Aorta (tissue), 5 donors: ENCODE measurements at regions of chr7 and their contacts with region 1.

Region 1: DNA sequence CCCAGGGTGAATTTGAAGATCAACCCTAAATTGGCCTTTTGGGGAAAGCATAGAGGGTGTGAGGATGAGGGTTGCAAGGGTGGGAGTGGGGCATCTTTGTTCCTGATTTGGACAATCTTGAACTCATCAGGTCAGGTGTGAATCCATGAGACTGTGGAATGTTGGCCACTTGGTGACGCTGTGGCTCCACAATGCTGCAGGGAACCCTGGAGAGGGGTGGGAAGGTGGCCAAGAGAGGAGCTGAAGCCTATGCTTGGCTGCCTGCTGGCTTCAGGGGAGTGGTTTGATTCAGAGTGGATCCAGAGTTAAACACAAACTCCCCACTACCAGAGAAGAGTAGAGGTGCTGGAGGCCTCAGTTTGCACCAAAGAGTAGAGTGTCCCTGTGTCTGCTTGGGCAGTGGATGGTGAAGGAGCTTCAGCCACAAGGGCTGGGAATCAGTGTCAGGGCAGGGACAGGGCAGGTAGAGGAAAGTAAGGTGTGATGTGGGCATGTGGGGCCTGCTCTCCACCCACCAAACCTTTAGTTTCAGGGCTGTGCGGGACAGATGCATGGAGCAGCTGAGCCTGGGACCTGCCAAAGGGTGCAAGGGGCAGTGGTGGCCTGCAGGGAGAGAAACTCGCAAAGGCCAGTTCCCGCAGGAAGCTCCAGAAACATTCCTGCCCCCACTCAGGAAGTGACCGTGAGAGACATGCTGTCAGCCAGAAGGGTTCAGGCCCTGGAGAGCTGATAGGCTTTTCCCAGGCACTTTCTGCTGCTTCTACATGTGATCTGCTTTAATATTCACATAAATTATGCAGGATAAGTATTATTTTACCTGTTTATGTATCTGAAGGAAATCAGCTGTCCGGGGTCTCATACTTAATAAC is 81.0 kb upstream of the PRSS58 start:
- DNase-seq: no peak
- ATAC-seq: no peak
- H3K4me3 ChIP-seq: no peak overlapping the region
- H3K27ac ChIP-seq: no peak overlapping the region
- H3K4me1 ChIP-seq: no peaks in the 10 kb centered on the region
- H3K27me3 ChIP-seq: peaks cover 0 to 2% of the 10 kb centered on the region in 2 donors

Region 2: GRCh38 chr7:142308326-142308725 is 30.5 kb before region 1 on chr7:
- intact Hi-C with region 1: loop called in 1 of 2 experiments (anchors 1 kb)
- DNase-seq: no peak
- ATAC-seq: peak; percentile 44
- H3K4me3 ChIP-seq: no peak overlapping the region
- H3K27ac ChIP-seq: no peak overlapping the region
- H3K4me1 ChIP-seq: no peaks in the 10 kb centered on the region
- H3K27me3 ChIP-seq: no peaks in the 10 kb centered on the region